ENCODE measurements at regions of chr5 and their contacts with region 1.

Region 1: DNA sequence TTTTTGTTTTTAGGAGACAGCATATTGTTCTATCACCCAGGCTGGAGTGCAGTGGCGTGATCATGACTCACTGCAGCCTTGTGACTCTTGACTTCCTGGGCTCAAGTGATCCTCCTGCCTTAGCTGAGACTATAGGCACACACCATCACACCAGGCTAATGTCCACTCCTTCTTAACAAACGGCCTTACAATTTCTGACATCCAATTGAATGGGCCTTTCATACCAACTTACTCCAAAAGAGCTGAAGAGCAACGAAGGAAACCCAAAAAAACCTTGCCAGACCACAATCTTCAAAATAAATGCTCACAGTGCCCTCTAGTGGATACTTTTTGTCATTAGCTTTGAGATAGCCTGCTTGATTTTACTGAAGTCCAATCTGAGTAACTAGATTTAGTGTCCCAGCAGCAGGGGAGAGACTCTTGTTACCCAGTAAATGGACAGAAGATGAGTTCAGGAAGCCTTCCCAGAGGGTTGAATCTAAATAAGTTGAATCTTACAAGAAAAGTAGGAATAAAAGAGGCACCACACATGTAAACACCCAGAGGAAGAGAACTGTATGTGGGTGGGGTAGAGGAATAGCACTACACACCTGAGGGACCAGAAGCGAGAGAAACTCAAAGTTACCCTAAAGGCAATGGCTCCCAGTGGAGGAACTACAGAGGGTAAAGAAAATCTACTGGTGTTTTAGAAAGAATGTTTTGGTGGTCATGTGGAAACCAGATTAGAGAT is 9.3 kb downstream of the ZNF622 start:
- DNase-seq: peak; percentile 19
- H3K4me3 Mint-ChIP-seq: peak overlapping the region; percentile 7
- H3K27ac Mint-ChIP-seq: peak overlapping the region; percentile 69
- H3K4me1 Mint-ChIP-seq: peaks cover 21% of the 10 kb centered on the region
- H3K27me3 Mint-ChIP-seq: no peaks in the 10 kb centered on the region
- CTCF ChIP-seq: peak; percentile 72

Region 2: GRCh38 chr5:16160706-16161105 is 295.6 kb before region 1 on chr5:
- CTCF ChIA-PET with region 1: interaction called, 25 read pairs
- intact Hi-C with region 1: loop called (anchors 1 kb)
- DNase-seq: peak; percentile 20
- H3K4me3 Mint-ChIP-seq: no peak overlapping the region
- H3K27ac Mint-ChIP-seq: no peak overlapping the region
- H3K4me1 Mint-ChIP-seq: no peaks in the 10 kb centered on the region
- H3K27me3 Mint-ChIP-seq: no peaks in the 10 kb centered on the region
- CTCF ChIP-seq: peak; percentile 42